CD8-positive, alpha-beta memory T cell (primary cell): ENCODE measurements at regions of chr5 and their contacts with region 1.

Region 1: GRCh38 chr5:80246001-80246758 is 9.7 kb downstream of the SERINC5 start:
- DNase-seq: no peak
- H3K4me3 ChIP-seq: no peak overlapping the region
- H3K4me3 Mint-ChIP-seq: peak overlapping the region in 4 of 7 donors; percentile 1 to 58 (median 14)
- H3K27ac ChIP-seq: no peak overlapping the region
- H3K27ac Mint-ChIP-seq: peak overlapping the region in 6 of 8 donors; percentile 8 to 59 (median 32)
- H3K4me1 ChIP-seq: peaks cover 52% of the 10 kb centered on the region
- H3K4me1 Mint-ChIP-seq: peaks cover 54 to 72% (median 72%) of the 10 kb centered on the region in 3 donors
- H3K27me3 ChIP-seq: no peaks in the 10 kb centered on the region
- H3K27me3 Mint-ChIP-seq: peaks cover 0 to 2% of the 10 kb centered on the region in 2 donors

Region 2: GRCh38 chr5:80225189-80225933 is 20.8 kb before region 1 on chr5:
- CTCF ChIA-PET with region 1: no interaction called
- POLR2A ChIA-PET with region 1: interaction called, 14 read pairs
- DNase-seq: no peak
- H3K4me3 ChIP-seq: no peak overlapping the region
- H3K4me3 Mint-ChIP-seq: peak overlapping the region in 1 of 7 donors; percentile 20
- H3K27ac ChIP-seq: no peak overlapping the region
- H3K27ac Mint-ChIP-seq: peak overlapping the region in 3 of 8 donors; percentile 24 to 30 (median 25)
- H3K4me1 ChIP-seq: peaks cover 50% of the 10 kb centered on the region
- H3K4me1 Mint-ChIP-seq: peaks cover 47 to 68% (median 53%) of the 10 kb centered on the region in 3 donors
- H3K27me3 ChIP-seq: no peaks in the 10 kb centered on the region
- H3K27me3 Mint-ChIP-seq: no peaks in the 10 kb centered on the region

Region 3: DNA sequence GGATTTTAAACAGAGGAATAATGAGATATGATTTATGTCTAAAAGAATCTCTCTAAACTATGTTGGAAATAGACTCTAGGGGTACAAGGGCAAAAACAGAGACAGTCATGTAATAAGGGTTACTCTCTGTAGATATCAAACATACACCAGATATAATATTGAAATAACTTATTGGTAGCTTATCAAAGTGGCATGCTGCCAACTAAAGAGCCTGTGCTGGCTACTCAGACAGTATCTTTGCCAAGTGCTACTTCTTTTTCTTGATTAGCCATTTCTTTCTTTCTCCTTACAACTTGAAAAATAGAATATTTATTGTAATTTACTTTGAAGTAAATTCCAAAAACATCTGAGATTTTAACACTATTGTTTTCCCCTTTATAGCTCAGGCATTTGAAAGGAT is 196.6 kb after region 1 on chr5:
- CTCF ChIA-PET with region 1: no interaction called
- POLR2A ChIA-PET with region 1: no interaction called
- DNase-seq: no peak
- H3K4me3 ChIP-seq: no peak overlapping the region
- H3K4me3 Mint-ChIP-seq: no peak overlapping the region
- H3K27ac ChIP-seq: no peak overlapping the region
- H3K27ac Mint-ChIP-seq: peak overlapping the region in 1 of 8 donors; percentile 83
- H3K4me1 ChIP-seq: no peaks in the 10 kb centered on the region
- H3K4me1 Mint-ChIP-seq: peaks cover 0 to 3% (median 0%) of the 10 kb centered on the region in 3 donors
- H3K27me3 ChIP-seq: no peaks in the 10 kb centered on the region
- H3K27me3 Mint-ChIP-seq: no peaks in the 10 kb centered on the region